ENCODE measurements at regions of chr5 and their contacts with region 1.

Region 1: GRCh38 chr5:35777358-35778087 is 79.2 kb upstream of the IL7R start:
- DNase-seq: peak in 4 of 5 donors; percentile 42 to 83 (median 68)
- H3K4me3 ChIP-seq: no peak overlapping the region
- H3K27ac ChIP-seq: no peak overlapping the region
- H3K4me1 ChIP-seq: no peaks in the 10 kb centered on the region
- H3K27me3 ChIP-seq: no peaks in the 10 kb centered on the region
- CTCF ChIP-seq: peak; percentile 62

Region 2: DNA sequence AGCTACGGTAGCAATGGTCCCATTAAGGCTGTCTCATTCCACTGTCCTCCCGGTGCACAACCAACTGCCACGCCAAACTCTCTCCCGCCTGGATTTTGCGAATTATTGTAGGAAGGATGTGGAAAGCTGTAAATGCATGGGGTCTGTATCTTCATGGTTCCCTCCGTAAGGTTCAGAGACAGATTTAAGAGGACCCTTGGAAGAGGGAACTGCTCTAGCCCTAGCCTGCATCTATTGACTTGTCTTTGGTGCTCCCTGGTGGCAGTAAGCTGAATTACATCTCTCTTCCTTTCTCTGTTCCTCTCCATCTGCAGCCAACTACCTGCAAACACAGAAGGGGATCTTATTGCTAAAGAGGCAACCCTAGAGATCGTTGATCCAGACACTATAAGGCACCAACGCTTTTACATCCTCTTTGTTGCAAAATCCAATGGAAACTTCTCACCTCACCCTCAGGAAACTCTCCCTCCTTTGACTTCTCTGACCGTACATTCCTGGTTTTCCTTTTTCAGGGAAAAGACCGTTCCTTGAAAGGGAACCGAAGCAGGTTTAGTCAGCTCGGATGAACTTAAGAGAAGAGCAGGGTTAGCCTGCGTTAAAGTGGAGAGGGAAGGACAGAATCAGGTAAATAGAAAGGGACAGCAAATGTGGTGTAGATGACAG is 149.0 kb after region 1 on chr5:
- intact Hi-C with region 1: loop called (anchors 10 kb)
- DNase-seq: peak in 4 of 5 donors; percentile 63 to 82 (median 76)
- H3K4me3 ChIP-seq: peak overlapping the region; percentile 12 to 35 (median 22)
- H3K27ac ChIP-seq: no peak overlapping the region
- H3K4me1 ChIP-seq: peaks cover 0 to 4% (median 0%) of the 10 kb centered on the region in 3 donors
- H3K27me3 ChIP-seq: no peaks in the 10 kb centered on the region
- CTCF ChIP-seq: peak; percentile 88

Region 3: DNA sequence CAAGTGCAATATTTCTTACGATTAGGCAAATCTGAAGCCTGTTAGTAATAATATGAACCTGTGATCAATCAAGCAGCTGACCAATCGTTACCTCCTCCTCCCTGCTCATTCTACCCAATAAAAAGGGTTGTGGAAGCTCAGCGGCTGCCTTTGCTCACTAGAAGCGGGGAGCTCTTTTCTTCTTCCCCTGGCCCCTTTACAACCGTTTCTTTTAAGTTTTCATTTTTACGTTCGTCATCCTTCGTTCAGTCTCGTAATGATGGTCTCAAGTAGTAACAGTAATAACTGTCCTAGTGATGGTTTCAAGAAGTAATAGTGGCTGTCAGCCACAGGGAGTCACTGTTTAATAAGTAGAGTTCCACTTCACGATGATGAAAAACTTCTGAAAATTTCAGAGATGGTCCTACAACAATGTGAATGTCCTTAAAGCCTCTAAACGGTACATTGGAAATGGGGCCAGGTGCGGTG is 282.9 kb after region 1 on chr5:
- intact Hi-C with region 1: no loop called
- DNase-seq: no peak
- H3K4me3 ChIP-seq: no peak overlapping the region
- H3K27ac ChIP-seq: no peak overlapping the region
- H3K4me1 ChIP-seq: no peaks in the 10 kb centered on the region
- H3K27me3 ChIP-seq: no peaks in the 10 kb centered on the region
- CTCF ChIP-seq: no peak

Measured in kidney (tissue), 22 donors.